Transverse colon (tissue), 4 donors: ENCODE measurements at regions of chrX and their contacts with region 1.

Region 1: GRCh38 chrX:30388325-30388724 is 79.1 kb upstream of the NR0B1 start:
- DNase-seq: no peak
- H3K4me3 ChIP-seq: no peak overlapping the region
- H3K27ac ChIP-seq: no peak overlapping the region
- H3K4me1 ChIP-seq: no peaks in the 10 kb centered on the region
- H3K27me3 ChIP-seq: no peaks in the 10 kb centered on the region
- CTCF ChIP-seq: no peak
- EP300 ChIP-seq: no peak
- POLR2A ChIP-seq: no peak

Region 2: GRCh38 chrX:31397119-31397518 is 1008.8 kb after region 1 on chrX:
- in situ Hi-C with region 1: no loop called
- intact Hi-C with region 1: loop called (anchors 5 kb)
- DNase-seq: no peak
- H3K4me3 ChIP-seq: no peak overlapping the region
- H3K27ac ChIP-seq: no peak overlapping the region
- H3K4me1 ChIP-seq: no peaks in the 10 kb centered on the region
- H3K27me3 ChIP-seq: no peaks in the 10 kb centered on the region
- CTCF ChIP-seq: no peak
- EP300 ChIP-seq: no peak
- POLR2A ChIP-seq: no peak